HCT116 (cell line): ENCODE measurements at regions of chr12 and their contacts with region 1.

Region 1: GRCh38 chr12:18261253-18261652 is at the start of gene PIK3C2G:
- DNase-seq: no peak
- ATAC-seq: no peak
- H3K4me3 ChIP-seq: no peak within 1 kb of the TSS
- H3K27ac ChIP-seq: no peak within 1 kb of the TSS
- H3K4me1 ChIP-seq: no peaks in the 10 kb centered on the region
- H3K27me3 ChIP-seq: no peaks in the 10 kb centered on the region
- CTCF ChIP-seq: no peak
- POLR2A ChIP-seq: no peak
- RAD21 ChIP-seq: no peak
- total RNA-seq, gene PIK3C2G: not detected

Region 2: DNA sequence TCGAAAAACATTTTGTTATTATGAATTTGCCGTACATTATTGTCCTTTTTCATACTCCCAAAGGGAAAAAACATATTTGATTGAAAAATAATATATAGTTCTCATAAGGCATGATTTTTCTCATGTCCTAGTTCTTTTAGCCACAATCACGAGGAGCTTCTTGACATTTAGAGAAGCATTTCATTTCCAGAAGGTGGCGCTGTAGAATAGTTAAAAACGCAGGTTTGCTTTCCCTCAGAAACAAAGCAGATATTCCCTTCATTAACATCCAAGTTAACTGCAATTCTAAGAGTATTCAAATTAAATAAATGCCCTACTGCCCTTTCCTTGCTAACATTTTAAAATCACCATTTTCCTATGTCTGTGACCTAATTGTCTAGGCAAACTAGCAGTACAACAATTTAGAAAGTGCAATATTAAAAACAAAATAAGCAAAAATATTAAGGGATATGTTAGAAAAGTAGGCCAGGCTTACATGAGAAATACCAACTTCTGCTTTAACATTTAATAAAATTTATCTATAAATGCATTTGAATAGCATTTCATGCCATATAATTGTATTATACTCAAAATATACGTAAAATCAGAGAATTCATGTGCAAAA is 10.8 kb before region 1 on chr12:
- CTCF ChIA-PET with region 1: interaction called, 17 read pairs
- POLR2A ChIA-PET with region 1: no interaction called
- RAD21 ChIA-PET with region 1: interaction called in 1 of 2 experiments, 3 read pairs
- intact Hi-C with region 1: no loop called
- DNase-seq: peak; percentile 54
- ATAC-seq: peak; percentile 57; the same call in 1 of the 2 replicates
- H3K4me3 ChIP-seq: no peak overlapping the region
- H3K27ac ChIP-seq: no peak overlapping the region
- H3K4me1 ChIP-seq: no peaks in the 10 kb centered on the region
- H3K27me3 ChIP-seq: no peaks in the 10 kb centered on the region
- CTCF ChIP-seq: peak; percentile 55 to 71 (median 58); a peak in 5 of 6 replicates
- POLR2A ChIP-seq: no peak
- RAD21 ChIP-seq: peak; percentile 74

Region 3: GRCh38 chr12:18275981-18276380 is 14.7 kb after region 1 on chr12:
- CTCF ChIA-PET with region 1: no interaction called
- POLR2A ChIA-PET with region 1: no interaction called
- RAD21 ChIA-PET with region 1: no interaction called
- intact Hi-C with region 1: no loop called
- DNase-seq: peak; percentile 4
- ATAC-seq: peak; percentile 67; the same call in 1 of the 2 replicates
- H3K4me3 ChIP-seq: no peak overlapping the region
- H3K27ac ChIP-seq: no peak overlapping the region
- H3K4me1 ChIP-seq: peaks cover 6 to 10% of the 10 kb centered on the region in 2 experiments; a peak in 3 of 4 replicates
- H3K27me3 ChIP-seq: no peaks in the 10 kb centered on the region
- CTCF ChIP-seq: no peak
- POLR2A ChIP-seq: no peak
- RAD21 ChIP-seq: no peak

Region 4: GRCh38 chr12:19553175-19553574 is 1291.9 kb after region 1 on chr12:
- CTCF ChIA-PET with region 1: no interaction called
- POLR2A ChIA-PET with region 1: no interaction called
- RAD21 ChIA-PET with region 1: no interaction called
- intact Hi-C with region 1: no loop called
- DNase-seq: no peak
- ATAC-seq: no peak
- H3K4me3 ChIP-seq: no peak overlapping the region
- H3K27ac ChIP-seq: no peak overlapping the region
- H3K4me1 ChIP-seq: no peaks in the 10 kb centered on the region
- H3K27me3 ChIP-seq: no peaks in the 10 kb centered on the region
- CTCF ChIP-seq: no peak
- POLR2A ChIP-seq: no peak
- RAD21 ChIP-seq: no peak